ENCODE measurements at regions of chr13 and their contacts with region 1.

Region 1: DNA sequence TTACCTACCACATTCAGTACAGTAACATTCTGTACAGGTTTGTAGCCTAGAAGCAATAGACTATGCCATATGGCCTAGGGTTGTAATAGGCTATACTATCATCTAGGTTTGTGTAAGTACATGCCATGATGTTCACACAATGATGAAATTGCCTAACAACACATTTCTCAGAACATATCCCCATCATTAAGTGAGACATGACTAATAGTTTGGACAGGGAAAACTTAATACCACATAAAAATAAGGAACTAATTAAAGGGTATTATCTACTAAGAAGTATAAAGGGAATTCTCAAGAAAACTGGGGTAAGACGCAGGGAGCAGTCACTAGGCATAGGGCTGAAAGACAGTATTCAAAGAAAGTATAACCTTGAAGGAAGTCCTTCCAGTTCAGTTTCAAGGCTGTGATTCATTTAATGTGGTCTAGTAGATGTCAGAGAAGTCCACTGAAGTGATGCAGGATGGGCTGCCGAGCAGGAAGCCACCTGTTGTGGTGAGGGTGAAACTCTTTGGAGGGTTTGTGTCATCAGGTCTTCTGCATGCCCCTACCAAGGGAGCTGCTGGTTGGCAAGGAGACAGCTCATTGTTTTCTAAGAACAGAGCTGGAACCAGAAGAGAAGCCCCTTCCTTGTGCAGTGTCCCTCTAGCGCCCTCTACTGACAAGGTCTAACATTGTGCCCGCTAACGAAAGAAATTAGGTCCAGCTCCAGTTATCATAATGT is 122.9 kb downstream of the OLFM4 start:
- DNase-seq: peak; percentile 71 to 73
- H3K4me3 ChIP-seq: no peak overlapping the region
- H3K27ac ChIP-seq: no peak overlapping the region
- H3K4me1 ChIP-seq: peaks cover 0 to 3% of the 10 kb centered on the region in 2 donors
- H3K27me3 ChIP-seq: no peaks in the 10 kb centered on the region
- CTCF ChIP-seq: peak; percentile 71 to 95 (median 87)
- POLR2A ChIP-seq: no peak

Region 2: GRCh38 chr13:52968074-52968700 is 183.3 kb before region 1 on chr13:
- intact Hi-C with region 1: loop called (anchors 5 kb)
- DNase-seq: peak; percentile 89 to 93
- H3K4me3 ChIP-seq: no peak overlapping the region
- H3K27ac ChIP-seq: no peak overlapping the region
- H3K4me1 ChIP-seq: peaks cover 0 to 3% of the 10 kb centered on the region in 2 donors
- H3K27me3 ChIP-seq: no peaks in the 10 kb centered on the region
- CTCF ChIP-seq: peak; percentile 85 to 100 (median 94)
- POLR2A ChIP-seq: no peak

Region 3: DNA sequence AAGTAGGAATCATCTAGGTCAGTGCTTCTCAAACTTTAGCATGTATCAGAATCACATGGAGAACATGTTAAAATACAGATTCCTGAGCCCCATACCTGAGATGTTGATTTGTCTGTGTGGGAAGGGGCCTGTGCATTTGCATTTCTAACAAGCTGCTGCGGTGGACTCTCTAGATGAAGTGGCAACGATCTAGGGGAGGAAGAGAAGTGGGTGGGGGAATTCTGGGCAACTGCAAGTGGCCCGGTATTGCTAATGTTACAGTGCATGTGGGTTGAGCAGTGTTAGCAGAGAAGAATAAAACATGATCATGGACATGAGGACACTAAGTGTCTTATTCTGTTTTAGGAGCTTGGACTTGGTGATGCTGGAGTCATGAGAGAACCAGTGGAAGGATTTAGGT is 206.1 kb after region 1 on chr13:
- intact Hi-C with region 1: no loop called
- DNase-seq: no peak
- H3K4me3 ChIP-seq: no peak overlapping the region
- H3K27ac ChIP-seq: no peak overlapping the region
- H3K4me1 ChIP-seq: no peaks in the 10 kb centered on the region
- H3K27me3 ChIP-seq: no peaks in the 10 kb centered on the region
- CTCF ChIP-seq: no peak
- POLR2A ChIP-seq: no peak

Measured in thyroid gland (tissue), 4 donors.